ENCODE measurements at regions of chr11 and their contacts with region 1.

Region 1: GRCh38 chr11:115215694-115216617 is 288.3 kb downstream of the CADM1 start:
- DNase-seq: no peak
- H3K4me3 Mint-ChIP-seq: no peak overlapping the region
- H3K27ac Mint-ChIP-seq: no peak overlapping the region
- H3K4me1 Mint-ChIP-seq: peaks cover 7% of the 10 kb centered on the region
- H3K27me3 Mint-ChIP-seq: peaks cover 26% of the 10 kb centered on the region

Region 2: DNA sequence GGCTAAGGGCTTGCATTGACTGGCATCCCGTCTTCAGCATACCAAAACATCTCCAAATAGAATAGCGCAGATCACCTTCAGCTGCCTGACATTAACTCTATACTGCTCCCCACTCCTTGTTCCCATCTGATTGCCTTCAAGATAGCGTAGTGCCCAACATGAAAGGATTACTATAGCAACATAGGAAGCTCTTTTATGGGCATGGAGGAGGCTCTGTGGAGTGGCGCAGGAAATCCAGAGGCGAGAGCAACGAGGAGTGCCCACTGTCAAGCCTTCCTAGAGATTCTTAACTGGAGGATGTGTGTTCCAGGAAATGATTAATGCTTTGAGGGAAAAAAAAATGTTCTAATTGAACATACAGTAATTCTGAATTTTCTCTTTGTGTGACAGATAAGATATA is 74.9 kb after region 1 on chr11:
- intact Hi-C with region 1: loop called (anchors 2 kb)
- DNase-seq: no peak
- H3K4me3 Mint-ChIP-seq: no peak overlapping the region
- H3K27ac Mint-ChIP-seq: no peak overlapping the region
- H3K4me1 Mint-ChIP-seq: no peaks in the 10 kb centered on the region
- H3K27me3 Mint-ChIP-seq: peaks cover 3% of the 10 kb centered on the region